ENCODE measurements at regions of chr10 and their contacts with region 1.

Region 1: DNA sequence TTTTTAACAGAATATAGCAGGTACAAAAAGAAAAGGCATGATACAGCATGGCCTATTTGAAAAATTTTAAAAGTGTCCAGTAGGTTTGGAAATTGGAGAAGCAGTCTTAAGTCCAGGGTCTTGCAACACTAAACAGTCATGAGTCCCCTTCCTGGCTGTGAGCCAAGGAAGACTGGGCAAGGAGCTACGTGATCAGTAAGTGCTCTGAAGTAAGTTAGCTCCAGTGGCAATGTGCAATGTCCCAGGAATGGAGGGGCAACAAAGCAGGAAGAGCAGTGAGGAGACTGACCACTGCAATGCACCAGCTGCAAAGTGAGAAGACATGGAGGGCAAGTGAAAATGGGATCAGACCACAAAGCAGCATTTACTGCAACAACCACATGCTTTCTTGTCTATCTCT is 72.9 kb upstream of the GRID1 start:
- DNase-seq: peak; percentile 66
- ATAC-seq: no peak
- H3K4me3 ChIP-seq: no peak overlapping the region
- H3K27ac ChIP-seq: peak overlapping the region; percentile 87
- H3K4me1 ChIP-seq: peaks cover 99% of the 10 kb centered on the region
- H3K27me3 ChIP-seq: no peaks in the 10 kb centered on the region
- CTCF ChIP-seq: no peak
- EP300 ChIP-seq: peak in 1 of 2 experiments; percentile 47; a peak in 1 of 4 replicates
- POLR2A ChIP-seq: no peak
- RAD21 ChIP-seq: no peak

Region 2: GRCh38 chr10:86411281-86411841 is 28.2 kb before region 1 on chr10:
- CTCF ChIA-PET with region 1: no interaction called
- POLR2A ChIA-PET with region 1: interaction called, 35 read pairs
- in situ Hi-C with region 1: no loop called
- intact Hi-C with region 1: loop called (anchors 2 kb)
- DNase-seq: peak; percentile 58
- ATAC-seq: peak; percentile 82
- H3K4me3 ChIP-seq: peak overlapping the region in 1 of 3 experiments; percentile 15; a peak in 1 of 6 replicates
- H3K27ac ChIP-seq: peak overlapping the region; percentile 64
- H3K4me1 ChIP-seq: peaks cover 37% of the 10 kb centered on the region
- H3K27me3 ChIP-seq: no peaks in the 10 kb centered on the region
- CTCF ChIP-seq: no peak
- EP300 ChIP-seq: peak in 1 of 2 experiments; percentile 25; a peak in 1 of 4 replicates
- POLR2A ChIP-seq: no peak
- RAD21 ChIP-seq: no peak

Region 3: GRCh38 chr10:86451604-86451960 is 12.0 kb after region 1 on chr10:
- CTCF ChIA-PET with region 1: no interaction called
- POLR2A ChIA-PET with region 1: interaction called, 4 read pairs
- in situ Hi-C with region 1: no loop called
- intact Hi-C with region 1: loop called (anchors 1 kb)
- DNase-seq: no peak
- ATAC-seq: no peak
- H3K4me3 ChIP-seq: no peak overlapping the region
- H3K27ac ChIP-seq: no peak overlapping the region
- H3K4me1 ChIP-seq: peaks cover 30% of the 10 kb centered on the region
- H3K27me3 ChIP-seq: no peaks in the 10 kb centered on the region
- CTCF ChIP-seq: no peak
- EP300 ChIP-seq: no peak
- POLR2A ChIP-seq: no peak
- RAD21 ChIP-seq: no peak

Region 4: DNA sequence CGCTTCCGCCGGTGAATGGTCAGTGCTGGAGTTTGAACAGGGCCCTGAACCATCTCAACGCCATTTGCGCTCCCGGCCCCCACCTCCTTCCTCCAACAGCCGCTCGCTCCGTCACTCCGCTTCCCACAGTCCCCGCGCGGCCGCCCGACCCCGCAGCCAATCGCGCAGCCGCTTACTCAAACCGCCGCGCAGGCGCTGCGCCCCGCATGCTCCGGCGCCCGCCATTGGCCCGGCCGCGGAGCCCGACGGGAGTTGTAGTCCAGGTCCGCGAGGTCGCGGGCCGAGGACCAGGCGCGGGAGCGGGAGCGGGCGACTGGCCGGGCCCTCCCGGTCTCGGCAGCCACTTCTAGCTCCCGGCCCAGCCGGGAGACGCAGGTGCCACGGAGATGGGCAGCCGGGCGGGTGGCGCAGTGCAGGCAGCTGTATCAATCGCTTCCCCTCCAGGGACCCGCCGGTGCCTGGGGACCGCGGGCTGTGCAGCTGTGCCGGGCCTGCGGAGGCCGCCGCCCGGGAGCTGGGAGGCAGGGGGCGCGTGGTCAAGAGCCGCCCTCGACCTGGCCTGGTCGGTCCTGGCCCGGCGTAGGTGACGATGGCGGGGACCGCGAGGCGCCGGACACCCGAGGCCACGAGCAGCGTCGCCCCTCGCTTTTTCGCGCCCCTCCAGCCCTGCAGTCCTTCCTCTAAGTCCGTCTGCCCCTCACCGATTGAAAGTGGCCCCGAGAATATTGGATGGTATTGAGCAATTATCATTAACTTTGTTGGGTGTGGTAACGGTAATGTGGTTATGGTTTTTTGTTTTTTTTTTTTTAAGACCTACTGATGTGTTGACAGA is 82.3 kb after region 1 on chr10 and contains the start of gene WAPL:
- CTCF ChIA-PET with region 1: no interaction called
- POLR2A ChIA-PET with region 1: interaction called, 5 read pairs
- in situ Hi-C with region 1: no loop called
- intact Hi-C with region 1: loop called (anchors 2 kb)
- DNase-seq: peak; percentile 87
- ATAC-seq: peak; percentile 94
- H3K4me3 ChIP-seq: peak within 1 kb of the TSS; percentile 73 to 99 (median 79)
- H3K27ac ChIP-seq: peak within 1 kb of the TSS; percentile 87
- H3K4me1 ChIP-seq: peaks cover 58% of the 10 kb centered on the region
- H3K27me3 ChIP-seq: no peaks in the 10 kb centered on the region; a peak in 1 of 5 replicates
- CTCF ChIP-seq: peak; percentile 28; the same call in 1 of the 2 replicates
- EP300 ChIP-seq: no peak
- POLR2A ChIP-seq: peak; percentile 60 to 77; a peak in 3 of 4 replicates
- RAD21 ChIP-seq: peak; percentile 44
- total RNA-seq, gene WAPL: 43.5 and 64.9 TPM in 2 replicates